T-cell (primary cell): ENCODE measurements at regions of chr3 and their contacts with region 1.

Region 1: GRCh38 chr3:45730409-45731154 is 41.4 kb downstream of the SACM1L start:
- DNase-seq: no peak
- ATAC-seq: no peak
- H3K4me3 ChIP-seq: no peak overlapping the region
- H3K4me3 Mint-ChIP-seq: no peak overlapping the region
- H3K27ac ChIP-seq: no peak overlapping the region
- H3K27ac Mint-ChIP-seq: peak overlapping the region; percentile 12 to 52
- H3K4me1 ChIP-seq: no peaks in the 10 kb centered on the region
- H3K4me1 Mint-ChIP-seq: peaks cover 17 to 27% (median 25%) of the 10 kb centered on the region in 3 donors
- H3K27me3 ChIP-seq: no peaks in the 10 kb centered on the region
- H3K27me3 Mint-ChIP-seq: no peaks in the 10 kb centered on the region

Region 2: GRCh38 chr3:45701172-45701867 is 29.3 kb before region 1 on chr3:
- CTCF ChIA-PET with region 1: interaction called in 1 of 2 experiments, 4 read pairs
- POLR2A ChIA-PET with region 1: interaction called in 1 of 2 experiments, 10 read pairs
- DNase-seq: no peak
- ATAC-seq: no peak
- H3K4me3 ChIP-seq: no peak overlapping the region
- H3K4me3 Mint-ChIP-seq: no peak overlapping the region
- H3K27ac ChIP-seq: no peak overlapping the region
- H3K27ac Mint-ChIP-seq: peak overlapping the region in 1 of 2 donors; percentile 1
- H3K4me1 ChIP-seq: peaks cover 11 to 16% of the 10 kb centered on the region in 2 experiments
- H3K4me1 Mint-ChIP-seq: peaks cover 67 to 70% (median 67%) of the 10 kb centered on the region in 3 donors
- H3K27me3 ChIP-seq: no peaks in the 10 kb centered on the region
- H3K27me3 Mint-ChIP-seq: no peaks in the 10 kb centered on the region

Region 3: DNA sequence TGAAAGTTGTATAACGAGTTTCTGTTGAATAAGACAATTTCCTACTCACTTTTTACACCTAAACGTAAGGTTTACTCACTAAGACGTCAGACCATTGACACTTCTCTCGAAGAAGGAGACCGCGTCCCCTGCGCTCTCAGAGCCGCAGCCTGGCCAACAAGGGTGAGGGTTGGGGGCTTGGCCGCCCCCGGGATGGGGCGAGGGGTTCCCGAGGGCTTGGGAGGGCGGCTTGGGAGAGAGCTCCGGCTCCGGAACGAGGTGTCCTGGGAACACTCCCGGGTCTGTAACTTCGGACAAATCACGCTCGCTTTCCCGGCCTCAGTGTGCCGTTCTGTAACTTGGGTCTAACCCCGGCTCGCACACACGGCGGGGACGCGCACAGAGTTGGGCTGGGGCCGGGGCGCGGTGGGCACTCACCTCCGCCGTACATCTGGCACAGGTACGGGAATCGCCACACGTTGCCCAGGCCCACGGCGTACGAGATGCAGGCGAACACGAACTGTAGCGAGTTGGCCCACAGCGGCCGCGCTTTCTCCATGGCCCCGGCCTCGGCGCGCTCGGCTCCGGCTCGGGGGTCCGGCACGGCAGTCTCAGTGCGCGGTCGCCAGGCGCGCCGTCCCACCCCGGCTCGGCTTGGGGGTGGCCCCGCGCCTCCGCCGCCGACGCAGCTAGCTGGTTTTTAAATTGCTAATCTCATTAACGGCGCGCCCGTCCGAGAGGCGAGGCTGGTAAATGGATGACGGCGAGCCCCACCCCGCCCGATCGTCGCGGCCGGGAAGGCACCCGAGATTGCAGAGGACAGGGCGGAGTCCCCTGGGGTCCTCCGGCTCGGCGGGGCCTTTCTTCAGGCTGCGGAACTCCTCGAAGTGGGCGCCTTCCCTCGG is 65.5 kb after region 1 on chr3 and contains the start of gene SLC6A20:
- CTCF ChIA-PET with region 1: no interaction called
- POLR2A ChIA-PET with region 1: no interaction called
- DNase-seq: peak in 6 of 35 experiments; percentile 1 to 20 (median 4)
- ATAC-seq: peak in 3 of 4 experiments; percentile 33 to 55 (median 45)
- H3K4me3 ChIP-seq: peak within 1 kb of the TSS; percentile 46 to 85
- H3K4me3 Mint-ChIP-seq: peak within 1 kb of the TSS; percentile 59 to 75 (median 73)
- H3K27ac ChIP-seq: no peak within 1 kb of the TSS
- H3K27ac Mint-ChIP-seq: no peak within 1 kb of the TSS
- H3K4me1 ChIP-seq: peaks cover 0 to 15% of the 10 kb centered on the region in 2 experiments
- H3K4me1 Mint-ChIP-seq: peaks cover 13 to 19% (median 17%) of the 10 kb centered on the region in 3 donors
- H3K27me3 ChIP-seq: peaks cover 7 to 50% of the 10 kb centered on the region in 2 experiments
- H3K27me3 Mint-ChIP-seq: peaks cover 41 to 62% of the 10 kb centered on the region in 2 donors
- total RNA-seq, gene SLC6A20: 0.12 to 0.44 (median 0.24) TPM in 4 of 5 donors, not detected in the other

Region 4: DNA sequence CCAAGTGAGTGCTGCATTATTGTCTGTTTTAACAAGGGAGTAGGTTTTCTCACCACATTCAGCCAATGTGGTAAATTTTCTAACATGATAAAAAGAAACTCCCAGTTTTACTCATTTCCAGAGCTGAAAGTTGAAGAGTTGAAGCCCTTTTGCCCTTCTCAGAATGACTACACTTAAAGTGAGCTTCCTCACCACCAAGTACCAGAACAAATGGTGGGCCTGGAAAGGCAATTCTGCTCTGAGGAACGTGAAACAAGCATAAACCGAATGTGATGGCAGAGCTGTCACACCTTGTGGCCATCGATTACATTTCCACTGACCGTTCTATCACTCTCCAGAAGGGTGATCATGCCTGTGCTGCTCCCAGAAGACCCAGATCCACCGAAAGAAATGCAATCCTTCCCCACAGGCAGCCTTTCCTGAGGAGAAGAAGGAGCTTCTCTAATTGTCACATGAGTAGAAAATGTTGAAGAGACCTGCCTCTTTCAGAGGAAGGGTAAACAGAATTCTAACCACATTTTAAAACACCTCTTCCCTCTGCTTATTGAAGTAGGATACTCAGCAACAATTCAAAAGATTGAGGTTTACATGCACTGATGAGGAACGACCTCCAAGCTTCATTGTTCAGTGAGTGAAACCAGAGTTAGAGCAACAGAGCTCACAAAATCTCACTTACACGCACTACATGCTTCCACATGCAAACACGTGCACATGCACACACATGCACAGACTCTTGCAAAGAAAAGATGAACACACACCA is 134.4 kb after region 1 on chr3:
- CTCF ChIA-PET with region 1: no interaction called
- POLR2A ChIA-PET with region 1: no interaction called
- DNase-seq: peak in 3 of 35 experiments; percentile 9 to 40 (median 21)
- ATAC-seq: peak; percentile 4 to 61 (median 36)
- H3K4me3 ChIP-seq: no peak overlapping the region
- H3K4me3 Mint-ChIP-seq: peak overlapping the region in 1 of 3 donors; percentile 39
- H3K27ac ChIP-seq: no peak overlapping the region
- H3K27ac Mint-ChIP-seq: peak overlapping the region in 1 of 2 donors; percentile 23
- H3K4me1 ChIP-seq: peaks cover 17 to 33% of the 10 kb centered on the region in 2 experiments
- H3K4me1 Mint-ChIP-seq: peaks cover 44 to 51% (median 45%) of the 10 kb centered on the region in 3 donors
- H3K27me3 ChIP-seq: peaks cover 0 to 7% of the 10 kb centered on the region in 2 experiments
- H3K27me3 Mint-ChIP-seq: peaks cover 13 to 24% of the 10 kb centered on the region in 2 donors